ENCODE measurements at regions of chr11 and their contacts with region 1.

Region 1: GRCh38 chr11:67071420-67072284 is 15.0 kb downstream of the RHOD start:
- DNase-seq: peak; percentile 71
- H3K4me3 ChIP-seq: no peak overlapping the region
- H3K27ac ChIP-seq: no peak overlapping the region
- H3K4me1 ChIP-seq: no peaks in the 10 kb centered on the region
- CTCF ChIP-seq: peak; percentile 80

Region 2: GRCh38 chr11:67022328-67022927 is 49.2 kb before region 1 on chr11:
- CTCF ChIA-PET with region 1: no interaction called
- POLR2A ChIA-PET with region 1: no interaction called
- intact Hi-C with region 1: no loop called
- DNase-seq: no peak
- H3K4me3 ChIP-seq: no peak overlapping the region
- H3K27ac ChIP-seq: no peak overlapping the region
- H3K4me1 ChIP-seq: peaks cover 25% of the 10 kb centered on the region
- CTCF ChIP-seq: no peak

Region 3: GRCh38 chr11:67053896-67054842 is 17.5 kb before region 1 on chr11:
- CTCF ChIA-PET with region 1: no interaction called
- POLR2A ChIA-PET with region 1: no interaction called
- intact Hi-C with region 1: loop called (anchors 1 kb)
- DNase-seq: peak; percentile 62
- H3K4me3 ChIP-seq: no peak overlapping the region
- H3K27ac ChIP-seq: no peak overlapping the region
- H3K4me1 ChIP-seq: no peaks in the 10 kb centered on the region
- CTCF ChIP-seq: peak; percentile 87

Measured in OCI-LY7 (cell line).